PC-9 (cell line): ENCODE measurements at regions of chr7 and their contacts with region 1.

Region 1: DNA sequence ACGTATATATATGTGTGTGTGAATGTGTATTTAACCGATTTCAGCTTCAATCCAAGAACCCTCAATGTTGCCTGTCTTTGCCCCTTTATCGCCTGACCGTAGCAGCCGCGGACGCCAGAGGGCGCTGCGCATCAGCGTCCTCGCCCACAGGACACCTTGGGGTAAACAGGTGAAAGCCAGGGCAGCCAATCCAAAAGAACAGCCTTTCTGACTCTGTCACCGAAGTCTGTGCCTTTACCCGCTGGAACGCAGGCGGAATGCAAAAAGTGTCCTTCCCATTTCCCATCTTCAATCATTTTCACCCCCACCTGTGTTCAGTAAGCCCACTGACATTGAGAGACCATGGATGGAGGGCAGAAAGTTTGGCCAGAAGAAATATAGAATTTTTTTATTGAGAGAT is 3.6 kb downstream of the NXPH1 start:
- DNase-seq: peak in 1 of 2 experiments; percentile 66
- H3K4me3 ChIP-seq: peak overlapping the region; percentile 33; the same call in 1 of the 2 replicates
- H3K27ac ChIP-seq: no peak overlapping the region
- H3K4me1 ChIP-seq: no peaks in the 10 kb centered on the region
- H3K27me3 ChIP-seq: peaks cover 28% of the 10 kb centered on the region
- CTCF ChIP-seq: peak; percentile 89

Region 2: DNA sequence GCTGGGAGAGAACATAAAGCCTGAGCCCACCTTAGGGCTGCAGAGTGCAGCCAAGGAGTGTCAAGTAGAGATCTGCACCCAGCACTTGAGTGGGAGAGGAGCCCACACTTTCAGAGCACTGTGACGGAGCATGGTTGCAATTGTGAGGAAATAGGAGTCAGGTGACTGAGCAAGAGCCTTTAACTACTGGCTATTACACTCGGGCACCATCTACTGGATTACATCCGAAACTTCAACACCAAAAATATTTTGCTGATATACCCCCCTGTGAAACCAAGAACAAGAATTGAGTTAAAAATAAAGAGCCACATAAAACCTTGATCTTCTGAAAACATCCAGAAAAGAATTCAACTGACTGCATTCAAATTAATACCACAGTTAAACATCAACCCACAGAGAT is 654.3 kb after region 1 on chr7:
- CTCF ChIA-PET with region 1: no interaction called
- POLR2A ChIA-PET with region 1: no interaction called
- intact Hi-C with region 1: loop called (anchors 5 kb)
- DNase-seq: no peak
- H3K4me3 ChIP-seq: no peak overlapping the region
- H3K27ac ChIP-seq: no peak overlapping the region
- H3K4me1 ChIP-seq: no peaks in the 10 kb centered on the region
- H3K27me3 ChIP-seq: no peaks in the 10 kb centered on the region
- CTCF ChIP-seq: peak; percentile 58